CD4-positive, alpha-beta T cell (primary cell): ENCODE measurements at regions of chr17 and their contacts with region 1.

Region 1: GRCh38 chr17:40433551-40434415 is 9.5 kb upstream of the IGFBP4 start:
- DNase-seq: peak in 3 of 14 experiments; percentile 33 to 41 (median 37)
- ATAC-seq: peak; percentile 74
- H3K4me3 ChIP-seq: no peak overlapping the region
- H3K4me3 Mint-ChIP-seq: no peak overlapping the region
- H3K27ac ChIP-seq: no peak overlapping the region
- H3K27ac Mint-ChIP-seq: no peak overlapping the region
- H3K4me1 ChIP-seq: peaks cover 3% of the 10 kb centered on the region
- H3K4me1 Mint-ChIP-seq: no peaks in the 10 kb centered on the region
- H3K27me3 ChIP-seq: no peaks in the 10 kb centered on the region
- H3K27me3 Mint-ChIP-seq: no peaks in the 10 kb centered on the region
- CTCF ChIP-seq: no peak

Region 2: GRCh38 chr17:40451420-40451819 is 17.6 kb after region 1 on chr17:
- CTCF ChIA-PET with region 1: no interaction called
- POLR2A ChIA-PET with region 1: no interaction called
- intact Hi-C with region 1: loop called in 1 of 2 experiments (anchors 2 kb)
- DNase-seq: no peak
- ATAC-seq: no peak
- H3K4me3 ChIP-seq: no peak overlapping the region
- H3K4me3 Mint-ChIP-seq: no peak overlapping the region
- H3K27ac ChIP-seq: no peak overlapping the region
- H3K27ac Mint-ChIP-seq: no peak overlapping the region
- H3K4me1 ChIP-seq: peaks cover 19% of the 10 kb centered on the region
- H3K4me1 Mint-ChIP-seq: peaks cover 16% of the 10 kb centered on the region
- H3K27me3 ChIP-seq: no peaks in the 10 kb centered on the region
- H3K27me3 Mint-ChIP-seq: no peaks in the 10 kb centered on the region
- CTCF ChIP-seq: no peak

Region 3: DNA sequence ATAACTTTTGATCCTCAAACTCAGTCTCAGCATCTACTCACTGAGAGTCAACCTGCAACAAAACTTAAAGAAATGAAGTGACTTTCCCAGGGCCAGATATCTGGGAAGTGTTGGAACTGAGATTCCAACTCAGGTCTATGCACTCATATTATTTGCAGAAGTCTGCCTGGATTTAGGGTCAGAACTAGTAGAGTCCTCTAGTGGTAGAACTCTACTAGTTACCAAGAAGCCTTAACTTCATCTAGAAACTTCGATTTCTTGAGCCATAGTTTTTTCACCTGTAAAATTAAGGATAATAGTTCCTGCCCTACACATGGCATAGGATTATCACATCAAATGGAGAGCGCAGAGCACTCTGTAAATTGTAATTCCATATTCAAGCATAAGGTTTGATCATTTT is 293.1 kb after region 1 on chr17:
- CTCF ChIA-PET with region 1: no interaction called
- POLR2A ChIA-PET with region 1: no interaction called
- intact Hi-C with region 1: no loop called
- DNase-seq: peak in 3 of 14 experiments; percentile 29 to 38 (median 33)
- ATAC-seq: no peak
- H3K4me3 ChIP-seq: no peak overlapping the region
- H3K4me3 Mint-ChIP-seq: no peak overlapping the region
- H3K27ac ChIP-seq: no peak overlapping the region
- H3K27ac Mint-ChIP-seq: no peak overlapping the region
- H3K4me1 ChIP-seq: no peaks in the 10 kb centered on the region
- H3K4me1 Mint-ChIP-seq: no peaks in the 10 kb centered on the region
- H3K27me3 ChIP-seq: peaks cover 0 to 24% of the 10 kb centered on the region in 2 experiments
- H3K27me3 Mint-ChIP-seq: peaks cover 41% of the 10 kb centered on the region
- CTCF ChIP-seq: peak; percentile 46